GM12878 (cell line): ENCODE measurements at regions of chr2 and their contacts with region 1.

Region 1: GRCh38 chr2:40300471-40300790 is 151.5 kb downstream of the SLC8A1 start:
- DNase-seq: no peak
- ATAC-seq: no peak
- H3K4me3 ChIP-seq: no peak overlapping the region
- H3K27ac ChIP-seq: no peak overlapping the region
- H3K4me1 ChIP-seq: no peaks in the 10 kb centered on the region
- H3K27me3 ChIP-seq: no peaks in the 10 kb centered on the region
- CTCF ChIP-seq: no peak
- EP300 ChIP-seq: no peak
- POLR2A ChIP-seq: no peak
- RAD21 ChIP-seq: no peak

Region 2: GRCh38 chr2:40325116-40325515 is 24.7 kb after region 1 on chr2:
- CTCF ChIA-PET with region 1: no interaction called
- POLR2A ChIA-PET with region 1: no interaction called
- RAD21 ChIA-PET with region 1: no interaction called
- SMC1A ChIA-PET with region 1: interaction called, 3 read pairs
- in situ Hi-C with region 1: no loop called
- intact Hi-C with region 1: loop called (anchors 1 kb)
- DNase-seq: no peak
- ATAC-seq: no peak
- H3K4me3 ChIP-seq: no peak overlapping the region
- H3K27ac ChIP-seq: no peak overlapping the region
- H3K4me1 ChIP-seq: no peaks in the 10 kb centered on the region
- H3K27me3 ChIP-seq: no peaks in the 10 kb centered on the region
- CTCF ChIP-seq: no peak
- EP300 ChIP-seq: no peak
- POLR2A ChIP-seq: no peak
- RAD21 ChIP-seq: no peak